ENCODE measurements at regions of chr10 and their contacts with region 1.

Region 1: GRCh38 chr10:75235375-75236177 is at the start of gene COMTD1:
- DNase-seq: peak; percentile 96 to 98
- H3K4me3 ChIP-seq: peak within 1 kb of the TSS; percentile 89
- H3K4me3 Mint-ChIP-seq: peak within 1 kb of the TSS; percentile 85
- H3K27ac Mint-ChIP-seq: peak within 1 kb of the TSS; percentile 43
- H3K4me1 ChIP-seq: peaks cover 41% of the 10 kb centered on the region
- H3K4me1 Mint-ChIP-seq: peaks cover 28% of the 10 kb centered on the region
- H3K27me3 ChIP-seq: no peaks in the 10 kb centered on the region
- H3K27me3 Mint-ChIP-seq: no peaks in the 10 kb centered on the region
- CTCF ChIP-seq: peak; percentile 100
- total RNA-seq, gene COMTD1: 38.7 and 39.0 TPM in 2 replicates

Region 2: GRCh38 chr10:75029857-75030256 is 205.7 kb before region 1 on chr10:
- CTCF ChIA-PET with region 1: no interaction called
- POLR2A ChIA-PET with region 1: interaction called, 7 read pairs
- intact Hi-C with region 1: loop called (anchors 10 kb)
- DNase-seq: no peak
- H3K4me3 ChIP-seq: no peak overlapping the region
- H3K4me3 Mint-ChIP-seq: no peak overlapping the region
- H3K27ac Mint-ChIP-seq: no peak overlapping the region
- H3K4me1 ChIP-seq: no peaks in the 10 kb centered on the region
- H3K4me1 Mint-ChIP-seq: no peaks in the 10 kb centered on the region
- H3K27me3 ChIP-seq: no peaks in the 10 kb centered on the region
- H3K27me3 Mint-ChIP-seq: no peaks in the 10 kb centered on the region
- CTCF ChIP-seq: no peak

Region 3: DNA sequence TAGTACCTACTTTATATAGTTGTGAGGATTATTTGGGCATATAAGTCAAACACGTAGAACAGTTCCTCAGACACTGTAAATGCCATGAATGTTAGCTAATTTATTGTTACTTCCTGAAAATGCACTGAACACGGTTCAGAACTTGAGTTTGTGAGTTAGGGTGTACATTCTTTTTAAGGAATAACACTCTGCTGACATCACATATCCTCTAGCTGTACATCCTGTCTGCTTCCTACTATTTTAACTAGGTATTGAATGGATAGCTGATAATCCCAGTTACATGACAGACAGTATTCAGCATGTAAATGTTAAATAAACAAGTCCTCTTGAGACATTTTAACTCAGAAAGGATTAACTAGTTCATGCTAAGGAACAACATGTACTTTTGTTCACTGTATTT is 108.1 kb before region 1 on chr10:
- CTCF ChIA-PET with region 1: interaction called, 10 read pairs
- POLR2A ChIA-PET with region 1: no interaction called
- intact Hi-C with region 1: no loop called
- DNase-seq: no peak
- H3K4me3 ChIP-seq: no peak overlapping the region
- H3K4me3 Mint-ChIP-seq: no peak overlapping the region
- H3K27ac Mint-ChIP-seq: no peak overlapping the region
- H3K4me1 ChIP-seq: no peaks in the 10 kb centered on the region
- H3K4me1 Mint-ChIP-seq: no peaks in the 10 kb centered on the region
- H3K27me3 ChIP-seq: no peaks in the 10 kb centered on the region
- H3K27me3 Mint-ChIP-seq: no peaks in the 10 kb centered on the region
- CTCF ChIP-seq: no peak

Region 4: GRCh38 chr10:75210282-75211006 is 25.1 kb before region 1 on chr10 and contains the start of gene VDAC2:
- CTCF ChIA-PET with region 1: interaction called, 21 read pairs
- POLR2A ChIA-PET with region 1: interaction called, 32 read pairs
- intact Hi-C with region 1: loop called (anchors 1 kb)
- DNase-seq: peak; percentile 93 to 96
- H3K4me3 ChIP-seq: peak within 1 kb of the TSS; percentile 75
- H3K4me3 Mint-ChIP-seq: peak within 1 kb of the TSS; percentile 100
- H3K27ac Mint-ChIP-seq: peak within 1 kb of the TSS; percentile 100
- H3K4me1 ChIP-seq: peaks cover 28% of the 10 kb centered on the region
- H3K4me1 Mint-ChIP-seq: peaks cover 5% of the 10 kb centered on the region
- H3K27me3 ChIP-seq: no peaks in the 10 kb centered on the region
- H3K27me3 Mint-ChIP-seq: no peaks in the 10 kb centered on the region
- CTCF ChIP-seq: peak in 1 of 2 experiments; percentile 8
- total RNA-seq, gene VDAC2: 244 and 250 TPM in 2 replicates

Region 5: DNA sequence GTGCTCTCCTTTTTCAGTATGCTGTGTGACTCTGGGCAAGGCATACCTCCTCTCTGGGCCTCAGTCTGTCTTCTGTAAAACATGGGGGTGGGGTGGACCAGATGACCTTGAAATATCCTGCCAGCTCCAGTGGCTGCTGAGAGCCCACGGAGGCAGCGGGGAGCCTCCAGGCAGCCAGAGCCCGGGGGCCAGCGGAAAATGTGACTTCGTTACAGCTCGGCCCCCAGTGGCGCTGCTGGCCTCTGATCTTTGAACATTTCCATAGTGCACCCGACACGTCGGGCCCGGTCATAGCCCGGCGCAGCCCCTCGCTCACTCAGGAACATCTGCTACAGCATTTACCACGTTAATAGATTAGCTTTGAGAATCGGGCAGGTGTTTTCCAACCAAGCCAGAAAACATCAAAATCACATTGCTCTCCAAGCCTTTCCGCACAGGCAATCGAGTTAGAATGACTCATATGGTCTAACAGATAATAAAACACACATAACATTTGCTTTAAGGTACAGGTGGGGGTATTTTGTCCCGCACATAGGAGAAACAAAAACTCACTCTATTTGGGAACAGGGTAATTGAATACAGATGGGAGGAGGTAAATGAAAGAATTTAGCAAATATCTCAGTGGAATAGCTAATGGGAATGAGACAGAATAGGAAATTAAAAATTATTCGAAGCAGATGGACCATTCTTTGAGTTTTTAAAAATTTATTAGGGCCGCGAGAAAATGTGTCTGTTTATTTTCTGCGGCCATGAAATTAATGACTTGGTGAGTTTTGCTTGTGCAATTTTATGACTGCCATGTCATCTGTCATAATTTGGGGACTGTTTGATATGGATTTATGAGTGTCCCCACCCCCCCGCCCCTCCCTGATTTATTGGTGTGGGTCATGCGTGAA is 26.5 kb after region 1 on chr10:
- CTCF ChIA-PET with region 1: interaction called, 4 read pairs
- POLR2A ChIA-PET with region 1: interaction called, 4 read pairs
- intact Hi-C with region 1: loop called (anchors 1 kb)
- DNase-seq: peak in 1 of 2 experiments; percentile 19
- H3K4me3 ChIP-seq: no peak overlapping the region
- H3K4me3 Mint-ChIP-seq: peak overlapping the region; percentile 62
- H3K27ac Mint-ChIP-seq: peak overlapping the region; percentile 60
- H3K4me1 ChIP-seq: peaks cover 15% of the 10 kb centered on the region; the same call in 1 of the 2 replicates
- H3K4me1 Mint-ChIP-seq: peaks cover 10% of the 10 kb centered on the region
- H3K27me3 ChIP-seq: no peaks in the 10 kb centered on the region
- H3K27me3 Mint-ChIP-seq: no peaks in the 10 kb centered on the region
- CTCF ChIP-seq: no peak

Region 6: GRCh38 chr10:75375838-75376237 is 140.3 kb after region 1 on chr10:
- CTCF ChIA-PET with region 1: no interaction called
- POLR2A ChIA-PET with region 1: no interaction called
- intact Hi-C with region 1: no loop called
- DNase-seq: no peak
- H3K4me3 ChIP-seq: no peak overlapping the region
- H3K4me3 Mint-ChIP-seq: no peak overlapping the region
- H3K27ac Mint-ChIP-seq: no peak overlapping the region
- H3K4me1 ChIP-seq: no peaks in the 10 kb centered on the region
- H3K4me1 Mint-ChIP-seq: peaks cover 8% of the 10 kb centered on the region
- H3K27me3 ChIP-seq: no peaks in the 10 kb centered on the region
- H3K27me3 Mint-ChIP-seq: peaks cover 5% of the 10 kb centered on the region
- CTCF ChIP-seq: no peak